MCF 10A (cell line): ENCODE measurements at regions of chr15 and their contacts with region 1.

Region 1: DNA sequence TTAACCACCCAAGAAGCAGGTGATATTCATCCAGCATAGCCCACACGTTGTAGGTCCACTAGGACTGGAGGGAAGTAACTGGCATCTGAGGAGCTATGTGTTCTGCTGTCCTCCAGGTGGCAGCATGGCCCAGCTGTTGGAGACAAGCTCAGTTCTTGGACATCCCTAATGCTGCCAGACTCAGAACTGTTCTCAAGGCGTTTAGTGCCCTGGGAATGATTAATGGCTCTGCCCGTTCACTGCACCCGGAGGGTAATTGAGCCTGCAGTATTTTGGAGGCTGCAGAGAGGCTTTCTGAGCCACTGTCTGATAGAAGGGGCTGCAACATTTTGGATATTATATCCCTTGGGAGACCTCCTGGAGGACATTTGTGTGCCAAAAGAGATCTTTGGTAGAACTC is 521.2 kb upstream of the SEMA6D start:
- DNase-seq: peak; percentile 76
- H3K4me3 Mint-ChIP-seq: no peak overlapping the region
- H3K27ac Mint-ChIP-seq: no peak overlapping the region
- H3K4me1 Mint-ChIP-seq: no peaks in the 10 kb centered on the region
- H3K27me3 Mint-ChIP-seq: no peaks in the 10 kb centered on the region
- CTCF ChIP-seq: peak; percentile 82

Region 2: GRCh38 chr15:46312133-46312740 is 883.8 kb before region 1 on chr15:
- CTCF ChIA-PET with region 1: interaction called, 3 read pairs
- POLR2A ChIA-PET with region 1: no interaction called
- intact Hi-C with region 1: loop called (anchors 5 kb)
- DNase-seq: peak; percentile 47
- H3K4me3 Mint-ChIP-seq: no peak overlapping the region
- H3K27ac Mint-ChIP-seq: no peak overlapping the region
- H3K4me1 Mint-ChIP-seq: no peaks in the 10 kb centered on the region
- H3K27me3 Mint-ChIP-seq: no peaks in the 10 kb centered on the region
- CTCF ChIP-seq: peak; percentile 82

Region 3: GRCh38 chr15:47500823-47501222 is 304.8 kb after region 1 on chr15:
- CTCF ChIA-PET with region 1: interaction called, 5 read pairs
- POLR2A ChIA-PET with region 1: no interaction called
- intact Hi-C with region 1: loop called (anchors 2 kb)
- DNase-seq: no peak
- H3K4me3 Mint-ChIP-seq: no peak overlapping the region
- H3K27ac Mint-ChIP-seq: no peak overlapping the region
- H3K4me1 Mint-ChIP-seq: no peaks in the 10 kb centered on the region
- H3K27me3 Mint-ChIP-seq: no peaks in the 10 kb centered on the region
- CTCF ChIP-seq: peak; percentile 31

Region 4: DNA sequence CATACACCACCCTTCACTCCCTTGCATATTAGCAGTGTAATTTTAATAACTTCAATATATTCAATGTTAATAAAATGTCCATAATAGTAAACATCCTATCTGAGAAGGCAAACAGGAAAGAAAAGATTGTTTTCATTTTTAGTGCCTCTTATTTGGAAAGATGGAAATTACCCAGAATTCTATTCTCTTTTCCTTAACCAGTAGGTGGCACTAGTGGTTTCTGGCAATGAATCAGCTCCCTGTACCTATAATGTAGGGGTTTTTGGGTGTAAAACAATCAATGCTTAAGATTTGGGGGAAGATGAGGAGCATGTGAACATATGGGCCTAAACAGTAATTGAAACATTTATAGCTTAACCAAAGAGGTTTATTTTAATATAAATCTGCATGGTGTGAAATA is 515.6 kb after region 1 on chr15:
- CTCF ChIA-PET with region 1: interaction called, 18 read pairs
- POLR2A ChIA-PET with region 1: no interaction called
- intact Hi-C with region 1: no loop called
- DNase-seq: peak; percentile 51
- H3K4me3 Mint-ChIP-seq: no peak overlapping the region
- H3K27ac Mint-ChIP-seq: no peak overlapping the region
- H3K4me1 Mint-ChIP-seq: peaks cover under 1% of the 10 kb centered on the region
- H3K27me3 Mint-ChIP-seq: no peaks in the 10 kb centered on the region
- CTCF ChIP-seq: peak; percentile 57

Region 5: GRCh38 chr15:47987908-47988532 is 792.0 kb after region 1 on chr15:
- CTCF ChIA-PET with region 1: interaction called, 81 read pairs
- POLR2A ChIA-PET with region 1: interaction called, 11 read pairs
- intact Hi-C with region 1: loop called (anchors 1 kb)
- DNase-seq: peak; percentile 64
- H3K4me3 Mint-ChIP-seq: no peak overlapping the region
- H3K27ac Mint-ChIP-seq: no peak overlapping the region
- H3K4me1 Mint-ChIP-seq: no peaks in the 10 kb centered on the region
- H3K27me3 Mint-ChIP-seq: no peaks in the 10 kb centered on the region
- CTCF ChIP-seq: peak; percentile 69

Region 6: DNA sequence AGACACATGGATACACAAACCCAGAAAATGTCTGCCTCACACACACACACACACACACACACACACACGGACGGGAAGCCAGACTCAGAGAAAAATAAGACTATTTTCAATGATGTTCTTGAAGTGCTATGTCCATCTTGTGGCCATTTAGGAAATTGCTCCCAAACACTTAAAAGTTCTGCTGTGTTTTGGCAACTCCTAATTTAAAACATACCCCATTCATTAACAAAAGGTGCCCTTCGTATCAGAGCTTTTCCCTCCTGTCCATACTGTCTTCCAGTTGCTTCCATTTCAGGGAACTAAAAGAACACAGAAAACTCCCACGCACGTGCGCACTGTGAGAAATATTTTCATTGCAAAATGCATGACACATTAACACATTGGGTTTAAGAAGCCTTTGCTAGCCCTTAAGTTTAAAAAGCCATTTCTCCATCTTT is 1054.6 kb after region 1 on chr15:
- CTCF ChIA-PET with region 1: interaction called, 3 read pairs
- POLR2A ChIA-PET with region 1: no interaction called
- intact Hi-C with region 1: loop called (anchors 1 kb)
- DNase-seq: peak; percentile 62
- H3K4me3 Mint-ChIP-seq: no peak overlapping the region
- H3K27ac Mint-ChIP-seq: peak overlapping the region; percentile 28
- H3K4me1 Mint-ChIP-seq: peaks cover 10% of the 10 kb centered on the region
- H3K27me3 Mint-ChIP-seq: no peaks in the 10 kb centered on the region
- CTCF ChIP-seq: peak; percentile 50

Region 7: DNA sequence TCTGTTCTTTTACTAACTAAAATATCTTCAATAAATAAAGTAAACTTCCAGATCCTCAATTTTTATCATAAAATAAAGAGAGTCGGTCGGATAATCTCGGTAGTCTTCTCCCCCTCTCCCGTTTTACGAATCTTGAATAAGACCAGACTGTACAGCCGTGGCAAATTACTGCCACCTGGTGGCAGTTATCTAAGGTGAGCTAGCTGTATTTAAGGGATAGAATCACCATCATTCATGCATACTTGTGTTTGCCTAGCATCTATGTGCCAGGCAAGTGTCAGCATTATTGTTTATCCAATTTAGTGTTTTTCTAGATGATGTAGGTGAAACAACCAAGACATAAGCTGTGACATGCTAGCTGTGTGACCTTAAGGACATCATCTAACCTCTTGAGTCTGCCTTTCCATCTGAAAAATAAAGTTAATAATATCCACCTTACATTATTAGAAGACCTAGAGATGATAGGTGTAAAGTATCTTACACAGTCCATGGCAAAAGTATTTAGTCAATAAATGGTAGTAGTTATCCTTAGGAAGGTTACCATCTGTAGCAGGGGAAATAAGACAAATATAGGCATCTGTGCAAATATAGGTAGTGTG is 1156.5 kb after region 1 on chr15:
- CTCF ChIA-PET with region 1: interaction called, 12 read pairs
- POLR2A ChIA-PET with region 1: no interaction called
- intact Hi-C with region 1: loop called (anchors 1 kb)
- DNase-seq: peak; percentile 83
- H3K4me3 Mint-ChIP-seq: no peak overlapping the region
- H3K27ac Mint-ChIP-seq: no peak overlapping the region
- H3K4me1 Mint-ChIP-seq: peaks cover 11% of the 10 kb centered on the region
- H3K27me3 Mint-ChIP-seq: no peaks in the 10 kb centered on the region
- CTCF ChIP-seq: peak; percentile 73